ENCODE measurements at regions of chr2 and their contacts with region 1.

Region 1: DNA sequence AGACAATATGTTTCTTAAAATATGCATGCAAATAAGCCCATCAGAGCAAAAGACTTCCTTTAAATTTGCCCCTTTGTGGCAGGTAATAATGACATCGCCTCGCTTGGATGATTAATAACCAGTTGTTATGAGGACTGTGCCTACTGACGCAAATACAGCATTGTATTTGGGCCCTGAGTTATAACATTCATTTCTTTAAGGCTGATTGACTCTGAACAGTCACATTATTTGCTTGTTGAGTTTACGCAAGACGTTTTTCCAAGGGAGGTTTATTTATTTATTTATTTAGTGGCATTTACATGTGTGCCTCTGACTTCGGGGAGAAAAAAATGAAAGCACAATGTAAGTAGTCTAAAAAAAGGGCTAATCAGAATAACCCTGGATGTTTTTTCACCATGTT is 88.3 kb downstream of the SLC8A1 start:
- DNase-seq: no peak
- H3K4me3 ChIP-seq: peak overlapping the region; percentile 36 to 48 (median 44)
- H3K27ac ChIP-seq: peak overlapping the region; percentile 70 to 77 (median 72)
- H3K4me1 ChIP-seq: peaks cover 31 to 55% (median 44%) of the 10 kb centered on the region in 4 donors
- H3K27me3 ChIP-seq: no peaks in the 10 kb centered on the region
- CTCF ChIP-seq: no peak
- EP300 ChIP-seq: no peak
- POLR2A ChIP-seq: no peak

Region 2: GRCh38 chr2:40127890-40128557 is 235.6 kb before region 1 on chr2:
- intact Hi-C with region 1: no loop called
- DNase-seq: no peak
- H3K4me3 ChIP-seq: no peak overlapping the region
- H3K27ac ChIP-seq: peak overlapping the region in 1 of 4 donors; percentile 16
- H3K4me1 ChIP-seq: peaks cover 41 to 52% (median 47%) of the 10 kb centered on the region in 4 donors
- H3K27me3 ChIP-seq: no peaks in the 10 kb centered on the region
- CTCF ChIP-seq: no peak
- EP300 ChIP-seq: no peak
- POLR2A ChIP-seq: no peak

Region 3: GRCh38 chr2:40244675-40245074 is 119.0 kb before region 1 on chr2:
- intact Hi-C with region 1: loop called (anchors 10 kb)
- DNase-seq: no peak
- H3K4me3 ChIP-seq: no peak overlapping the region
- H3K27ac ChIP-seq: peak overlapping the region; percentile 24 to 62 (median 52)
- H3K4me1 ChIP-seq: peaks cover 40 to 66% (median 59%) of the 10 kb centered on the region in 4 donors
- H3K27me3 ChIP-seq: no peaks in the 10 kb centered on the region
- CTCF ChIP-seq: peak; percentile 40 to 65 (median 62)
- EP300 ChIP-seq: no peak
- POLR2A ChIP-seq: no peak

Measured in esophagus muscularis mucosa (tissue), 4 donors.